Left colon (tissue), 2 donors: ENCODE measurements at regions of chr7 and their contacts with region 1.

Region 1: DNA sequence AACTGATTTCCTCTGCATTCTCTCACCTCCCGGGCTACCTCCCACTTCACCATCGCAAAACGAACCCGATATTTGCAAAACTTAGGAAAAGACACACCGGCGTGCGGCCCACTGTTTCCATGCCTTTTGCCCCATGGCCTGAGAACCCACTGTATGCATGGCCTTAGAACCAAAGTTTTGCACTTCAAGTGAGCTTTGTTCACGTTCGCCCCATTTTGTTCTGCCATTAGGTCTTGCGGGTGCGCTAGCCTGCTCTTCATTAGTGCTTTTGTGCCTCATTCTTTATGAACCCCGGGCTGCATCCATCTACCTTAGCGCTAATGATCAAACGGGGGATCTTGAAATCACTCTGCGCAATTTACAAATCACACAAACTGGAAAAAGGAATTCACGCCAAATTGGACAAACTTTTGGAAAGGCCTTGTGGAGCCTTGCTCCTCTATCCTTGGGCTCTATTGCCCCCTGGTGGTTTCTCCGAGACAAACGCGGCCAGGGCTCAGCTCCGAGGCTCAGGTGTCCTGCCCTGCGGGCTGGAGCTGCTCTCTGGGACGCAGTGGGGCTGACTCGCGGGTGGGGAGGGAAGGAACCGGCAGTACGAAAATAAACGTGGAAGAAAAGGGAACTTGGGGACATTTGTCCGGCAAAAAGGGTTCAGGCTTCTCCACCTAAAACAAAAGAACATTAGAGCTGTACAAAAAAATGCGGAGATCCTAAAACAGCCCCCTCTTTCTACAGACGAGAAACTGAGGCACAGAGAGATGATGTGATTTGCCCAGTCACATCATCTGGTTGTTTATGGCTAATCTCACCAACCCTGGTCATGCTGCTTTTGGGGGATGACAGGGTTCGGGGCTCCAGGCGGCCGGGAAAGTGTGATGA is 300.4 kb upstream of the NFE2L3 start:
- DNase-seq: peak; percentile 81 to 88
- ATAC-seq: peak; percentile 59

Region 2: DNA sequence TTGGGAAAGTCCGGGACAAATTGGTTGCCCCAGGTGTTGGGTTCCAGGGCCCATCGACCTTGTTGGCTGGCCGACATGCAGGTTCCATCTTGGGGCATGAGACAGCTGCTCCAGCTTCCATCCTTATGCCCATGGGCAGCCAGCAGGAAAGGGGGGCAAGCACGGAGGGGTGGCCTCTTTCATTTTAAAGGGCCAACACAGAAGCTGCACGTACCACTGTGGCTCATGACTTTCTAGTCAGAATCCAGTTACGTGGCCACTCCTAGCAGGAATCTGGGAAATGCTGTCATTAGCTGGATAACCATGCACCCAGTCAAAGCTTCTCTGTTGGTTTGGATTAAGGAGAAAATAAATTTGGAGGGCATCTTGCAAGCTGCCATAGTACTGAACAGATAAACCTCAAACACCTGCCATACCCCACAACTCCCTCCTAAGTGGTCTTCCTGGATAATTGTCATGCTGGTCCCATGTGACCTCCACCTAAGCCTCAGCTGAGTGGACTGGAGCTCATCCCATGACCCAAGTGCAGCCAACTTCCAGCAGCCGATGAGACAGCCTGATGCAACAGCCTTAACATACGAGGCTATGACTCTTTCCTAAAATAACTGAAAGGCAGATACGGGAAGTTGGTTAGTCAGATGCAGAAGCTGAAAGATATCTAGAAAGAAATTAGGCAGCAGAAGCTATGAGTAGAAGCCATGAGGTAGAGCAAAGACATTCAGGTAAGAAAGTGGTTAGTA is 1072.9 kb before region 1 on chr7:
- intact Hi-C with region 1: no loop called
- DNase-seq: no peak
- ATAC-seq: no peak

Region 3: DNA sequence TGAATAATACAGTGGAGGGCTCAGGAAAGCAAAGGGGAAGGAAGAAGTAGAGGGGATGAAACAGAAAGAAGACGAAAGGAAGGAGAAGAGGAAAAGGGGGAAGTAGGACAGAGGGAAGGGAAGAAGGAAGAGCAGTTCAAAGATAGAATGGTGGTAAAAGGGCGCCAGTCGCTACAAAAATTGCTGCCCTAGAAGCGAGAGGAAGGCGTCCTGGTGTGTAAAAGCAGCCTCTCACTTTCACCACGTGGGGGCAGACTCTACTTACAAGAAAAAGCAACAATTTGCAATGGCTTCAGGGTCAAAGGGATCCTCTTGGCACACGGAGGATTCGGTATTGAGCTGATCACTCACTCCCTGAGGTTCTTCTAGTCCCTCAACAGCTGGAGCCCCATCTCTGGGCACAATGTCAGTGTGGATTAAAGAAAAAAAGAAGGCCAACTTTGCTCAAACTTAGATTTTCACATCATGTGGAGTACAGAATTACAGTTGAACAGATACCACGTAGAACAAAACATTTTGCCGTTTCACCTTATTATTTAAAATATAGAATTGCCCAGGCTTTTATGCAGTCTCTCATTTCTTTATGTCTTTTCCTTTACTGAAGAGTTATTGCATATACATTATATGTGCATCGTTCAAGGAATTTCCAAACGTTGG is 591.9 kb before region 1 on chr7:
- intact Hi-C with region 1: loop called in 1 of 2 experiments (anchors 5 kb)
- DNase-seq: peak; percentile 64 to 75
- ATAC-seq: peak; percentile 72

Region 4: GRCh38 chr7:25389489-25390106 is 462.0 kb before region 1 on chr7:
- intact Hi-C with region 1: loop called in 1 of 2 experiments (anchors 5 kb)
- DNase-seq: peak in 1 of 2 donors; percentile 23
- ATAC-seq: peak; percentile 73

Region 5: GRCh38 chr7:25565949-25566348 is 285.6 kb before region 1 on chr7:
- intact Hi-C with region 1: loop called in 1 of 2 experiments (anchors 5 kb)
- DNase-seq: peak in 1 of 2 donors; percentile 73
- ATAC-seq: no peak

Region 6: DNA sequence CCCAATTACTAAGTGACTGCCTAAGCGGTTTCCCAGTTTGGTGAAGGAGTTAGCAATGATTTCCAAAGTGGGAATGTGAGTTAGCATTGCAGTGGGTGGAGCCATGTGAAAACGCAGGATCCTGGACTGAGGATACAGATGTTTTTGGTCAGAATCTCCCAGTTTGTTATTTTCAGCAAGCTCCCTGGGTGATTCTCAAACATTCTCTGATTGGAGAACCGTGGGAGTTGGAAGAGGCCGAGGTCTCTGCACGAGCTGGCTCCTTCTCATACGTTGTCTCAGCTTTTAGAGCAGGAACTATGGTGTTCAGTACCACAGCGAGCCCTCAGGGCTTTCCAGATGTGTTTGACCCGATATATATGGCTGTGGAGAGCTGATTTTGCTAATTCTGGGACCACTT is 226.7 kb before region 1 on chr7:
- intact Hi-C with region 1: no loop called
- DNase-seq: no peak
- ATAC-seq: no peak

Region 7: GRCh38 chr7:25940086-25940906 is 88.7 kb after region 1 on chr7:
- intact Hi-C with region 1: no loop called
- DNase-seq: no peak
- ATAC-seq: peak; percentile 63

Region 8: DNA sequence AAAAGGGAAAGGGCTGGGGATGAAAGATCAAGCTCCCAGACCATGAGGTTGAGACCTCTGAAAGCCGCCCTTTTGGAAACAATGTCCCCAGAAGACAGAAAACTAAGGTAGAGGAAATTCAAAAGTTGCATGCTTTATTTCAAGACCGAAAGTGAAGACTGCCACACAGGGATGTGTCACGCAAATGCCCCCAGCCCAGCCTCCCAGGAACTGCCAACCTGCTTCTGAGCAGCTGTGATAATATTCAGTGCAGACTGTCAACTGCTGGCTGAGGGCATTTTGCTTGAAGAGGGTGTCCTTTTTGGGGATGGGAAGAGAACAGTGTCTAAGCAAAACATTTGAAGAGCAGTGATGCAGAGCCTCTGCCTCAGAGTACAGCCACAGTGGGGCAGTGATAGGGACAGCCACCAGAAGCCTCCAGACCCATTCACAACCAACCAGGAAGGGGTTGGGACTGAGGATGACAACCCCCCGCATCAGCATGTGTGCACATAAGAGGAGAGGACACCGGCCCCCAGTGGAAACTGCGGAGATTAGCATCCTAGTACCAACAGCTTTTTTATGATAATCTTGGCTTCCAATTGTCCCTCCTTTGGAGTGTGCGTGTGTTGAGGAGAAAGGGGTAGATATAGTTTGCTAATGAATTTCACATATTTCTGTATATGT is 265.7 kb after region 1 on chr7:
- intact Hi-C with region 1: no loop called
- DNase-seq: no peak
- ATAC-seq: no peak

Region 9: GRCh38 chr7:27179503-27180430 is 1328.2 kb after region 1 on chr7:
- intact Hi-C with region 1: loop called in 1 of 2 experiments (anchors 10 kb)
- DNase-seq: peak; percentile 87
- ATAC-seq: peak; percentile 45